CD4-positive, alpha-beta T cell (primary cell): ENCODE measurements at regions of chr13 and their contacts with region 1.

Region 1: DNA sequence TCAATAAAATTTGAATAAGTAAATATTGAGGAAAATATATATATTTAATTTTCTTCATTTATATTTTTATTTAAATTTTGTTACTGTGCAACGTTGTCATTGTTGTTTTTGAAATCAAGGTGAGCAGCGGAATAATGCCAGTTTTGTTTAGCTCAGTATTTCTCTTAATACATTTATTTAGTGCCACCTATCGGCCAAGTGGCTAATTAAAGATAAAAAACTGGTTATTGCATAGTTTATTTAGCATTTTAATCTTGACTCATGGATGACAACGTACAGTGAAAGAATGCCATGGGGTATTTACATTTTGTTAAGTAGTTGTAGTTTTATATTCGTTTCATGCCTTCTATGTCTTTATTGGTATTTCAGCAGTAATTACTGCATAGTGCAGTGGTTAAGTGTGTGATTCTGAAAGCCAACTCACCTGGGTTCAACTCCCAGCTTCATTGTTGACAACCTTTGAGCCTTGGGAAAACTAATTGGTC is 265.9 kb downstream of the MYO16 start:
- DNase-seq: peak in 4 of 14 experiments; percentile 10 to 56 (median 46)
- ATAC-seq: no peak
- H3K4me3 ChIP-seq: no peak overlapping the region
- H3K4me3 Mint-ChIP-seq: no peak overlapping the region
- H3K27ac ChIP-seq: no peak overlapping the region
- H3K27ac Mint-ChIP-seq: no peak overlapping the region
- H3K4me1 ChIP-seq: no peaks in the 10 kb centered on the region
- H3K4me1 Mint-ChIP-seq: peaks cover 9% of the 10 kb centered on the region
- H3K27me3 ChIP-seq: no peaks in the 10 kb centered on the region
- H3K27me3 Mint-ChIP-seq: peaks cover 9% of the 10 kb centered on the region
- CTCF ChIP-seq: peak; percentile 79

Region 2: GRCh38 chr13:107205303-107206104 is 1689.8 kb before region 1 on chr13:
- CTCF ChIA-PET with region 1: no interaction called
- POLR2A ChIA-PET with region 1: no interaction called
- intact Hi-C with region 1: loop called in 1 of 2 experiments (anchors 5 kb)
- DNase-seq: peak; percentile 14 to 66 (median 38)
- ATAC-seq: peak; percentile 49
- H3K4me3 ChIP-seq: no peak overlapping the region
- H3K4me3 Mint-ChIP-seq: no peak overlapping the region
- H3K27ac ChIP-seq: no peak overlapping the region
- H3K27ac Mint-ChIP-seq: no peak overlapping the region
- H3K4me1 ChIP-seq: no peaks in the 10 kb centered on the region
- H3K4me1 Mint-ChIP-seq: no peaks in the 10 kb centered on the region
- H3K27me3 ChIP-seq: no peaks in the 10 kb centered on the region
- H3K27me3 Mint-ChIP-seq: peaks cover 5% of the 10 kb centered on the region
- CTCF ChIP-seq: peak; percentile 95

Region 3: DNA sequence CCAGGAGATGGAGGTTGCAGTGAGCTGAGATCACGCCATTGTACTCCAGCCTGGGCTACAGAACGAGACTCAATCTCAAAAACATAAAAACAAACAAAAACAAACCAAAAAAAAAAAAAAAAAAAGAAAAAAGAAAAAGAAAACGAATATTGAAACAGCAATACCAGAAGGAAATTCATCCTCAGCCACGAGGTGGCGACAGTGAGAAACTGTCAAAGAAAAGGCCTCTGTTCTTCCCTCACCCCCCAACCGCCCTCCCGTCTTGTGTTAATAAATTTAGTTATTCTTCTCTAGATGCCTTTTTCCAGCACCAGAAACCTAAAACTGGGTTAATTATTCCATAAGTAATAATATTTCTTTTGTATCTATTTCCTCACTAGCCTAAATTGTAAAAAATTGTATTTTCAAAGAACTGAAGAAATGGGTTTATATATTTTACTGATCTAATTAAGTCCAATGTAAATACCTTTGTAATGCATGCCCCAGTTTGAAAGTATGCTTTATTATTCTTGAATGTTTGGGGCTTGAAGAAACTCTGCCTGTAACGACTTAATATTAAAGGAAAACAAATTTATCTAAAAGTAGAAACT is 718.5 kb before region 1 on chr13:
- CTCF ChIA-PET with region 1: no interaction called
- POLR2A ChIA-PET with region 1: no interaction called
- intact Hi-C with region 1: loop called in 1 of 2 experiments (anchors 5 kb)
- DNase-seq: peak; percentile 31 to 71 (median 46)
- ATAC-seq: peak; percentile 56
- H3K4me3 ChIP-seq: no peak overlapping the region
- H3K4me3 Mint-ChIP-seq: no peak overlapping the region
- H3K27ac ChIP-seq: no peak overlapping the region
- H3K27ac Mint-ChIP-seq: no peak overlapping the region
- H3K4me1 ChIP-seq: no peaks in the 10 kb centered on the region
- H3K4me1 Mint-ChIP-seq: no peaks in the 10 kb centered on the region
- H3K27me3 ChIP-seq: no peaks in the 10 kb centered on the region
- H3K27me3 Mint-ChIP-seq: peaks cover 5% of the 10 kb centered on the region
- CTCF ChIP-seq: peak; percentile 69

Region 4: GRCh38 chr13:108322206-108322824 is 572.9 kb before region 1 on chr13:
- CTCF ChIA-PET with region 1: interaction called, 4 read pairs
- POLR2A ChIA-PET with region 1: no interaction called
- intact Hi-C with region 1: loop called (anchors 1 to 2 kb)
- DNase-seq: peak in 3 of 14 experiments; percentile 65 to 68 (median 67)
- ATAC-seq: peak; percentile 77
- H3K4me3 ChIP-seq: no peak overlapping the region
- H3K4me3 Mint-ChIP-seq: no peak overlapping the region
- H3K27ac ChIP-seq: no peak overlapping the region
- H3K27ac Mint-ChIP-seq: no peak overlapping the region
- H3K4me1 ChIP-seq: peaks cover 9% of the 10 kb centered on the region
- H3K4me1 Mint-ChIP-seq: peaks cover 17% of the 10 kb centered on the region
- H3K27me3 ChIP-seq: no peaks in the 10 kb centered on the region
- H3K27me3 Mint-ChIP-seq: peaks cover 11% of the 10 kb centered on the region
- CTCF ChIP-seq: peak; percentile 85

Region 5: GRCh38 chr13:108947551-108948030 is 52.3 kb after region 1 on chr13:
- CTCF ChIA-PET with region 1: no interaction called
- POLR2A ChIA-PET with region 1: no interaction called
- intact Hi-C with region 1: no loop called
- DNase-seq: no peak
- ATAC-seq: no peak
- H3K4me3 ChIP-seq: no peak overlapping the region
- H3K4me3 Mint-ChIP-seq: no peak overlapping the region
- H3K27ac ChIP-seq: no peak overlapping the region
- H3K27ac Mint-ChIP-seq: no peak overlapping the region
- H3K4me1 ChIP-seq: no peaks in the 10 kb centered on the region
- H3K4me1 Mint-ChIP-seq: no peaks in the 10 kb centered on the region
- H3K27me3 ChIP-seq: no peaks in the 10 kb centered on the region
- H3K27me3 Mint-ChIP-seq: no peaks in the 10 kb centered on the region
- CTCF ChIP-seq: no peak

Region 6: DNA sequence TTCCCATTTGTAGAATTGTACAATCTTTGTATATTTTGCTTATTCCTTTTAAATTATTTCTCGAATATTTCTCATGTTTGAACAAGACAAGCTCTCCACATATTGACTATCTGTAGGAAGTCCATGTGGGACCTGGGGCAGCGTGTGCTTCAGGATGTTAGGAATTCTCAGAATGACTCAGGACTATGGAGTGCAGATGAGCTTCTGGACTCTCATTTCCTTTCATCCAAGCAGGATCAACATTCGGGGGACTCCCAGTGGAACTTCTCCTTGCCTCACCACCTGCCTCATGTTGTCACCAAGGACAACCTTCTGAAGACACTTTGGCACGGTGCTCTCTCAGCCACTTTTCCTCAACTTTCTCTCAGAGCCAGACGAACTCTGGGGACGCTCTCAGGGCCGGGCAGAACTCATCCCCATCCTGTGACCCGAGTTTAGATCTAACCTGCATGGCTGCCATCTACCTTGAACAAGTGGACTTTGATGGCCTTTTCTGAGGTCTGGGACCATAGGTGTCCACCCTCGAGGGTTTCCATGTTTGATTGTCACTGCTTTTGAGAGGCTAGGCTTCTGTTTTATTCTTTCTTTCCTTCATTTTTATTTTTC is 449.4 kb after region 1 on chr13:
- CTCF ChIA-PET with region 1: no interaction called
- POLR2A ChIA-PET with region 1: no interaction called
- intact Hi-C with region 1: no loop called
- DNase-seq: no peak
- ATAC-seq: no peak
- H3K4me3 ChIP-seq: no peak overlapping the region
- H3K4me3 Mint-ChIP-seq: no peak overlapping the region
- H3K27ac ChIP-seq: no peak overlapping the region
- H3K27ac Mint-ChIP-seq: no peak overlapping the region
- H3K4me1 ChIP-seq: no peaks in the 10 kb centered on the region
- H3K4me1 Mint-ChIP-seq: no peaks in the 10 kb centered on the region
- H3K27me3 ChIP-seq: peaks cover 0 to 10% of the 10 kb centered on the region in 2 experiments
- H3K27me3 Mint-ChIP-seq: peaks cover 20% of the 10 kb centered on the region
- CTCF ChIP-seq: no peak